ENCODE measurements at regions of chr13 and their contacts with region 1.

Region 1: DNA sequence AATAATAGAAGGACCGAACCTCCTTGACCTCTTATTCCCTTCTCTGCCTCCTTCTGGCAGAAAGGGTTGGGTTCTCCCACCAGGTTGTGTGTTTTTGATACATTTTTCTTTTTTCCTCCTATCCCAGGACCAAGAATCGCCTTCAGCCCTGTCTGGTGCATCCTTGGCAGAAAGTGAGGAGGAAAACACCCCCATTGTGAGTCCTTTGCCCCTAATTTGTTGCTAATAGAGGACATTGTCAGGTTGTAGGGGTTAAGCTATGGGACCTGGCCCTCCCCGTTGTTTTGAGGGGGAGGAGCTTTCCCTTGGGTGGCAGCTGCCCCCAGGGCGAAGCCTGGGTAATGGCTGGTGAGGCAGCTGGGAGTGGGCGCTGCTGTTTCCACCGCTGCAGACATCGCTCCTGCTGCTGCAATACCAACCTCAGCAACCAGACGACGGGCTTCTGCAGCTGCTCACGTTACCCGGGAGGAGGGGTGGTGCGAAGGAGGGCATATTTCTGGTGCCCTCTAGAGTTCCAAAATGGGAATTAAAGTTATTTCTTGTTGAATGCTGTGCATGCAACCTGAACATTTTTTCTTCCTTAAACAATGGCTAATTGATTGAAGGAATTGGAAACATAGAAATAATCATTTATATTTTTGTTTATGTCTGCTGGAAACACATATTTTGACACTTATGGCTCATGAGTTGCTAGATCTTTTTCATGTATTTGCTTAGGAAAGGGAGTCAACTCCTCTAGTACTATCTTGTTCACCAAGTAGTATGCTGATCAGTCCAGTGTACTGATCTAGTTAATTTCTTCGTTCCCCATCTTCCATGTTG is 1.5 kb downstream of the ZMYM2 start:
- DNase-seq: peak; percentile 93
- H3K4me3 Mint-ChIP-seq: peak overlapping the region; percentile 94
- H3K27ac Mint-ChIP-seq: peak overlapping the region; percentile 96
- H3K4me1 Mint-ChIP-seq: peaks cover 34% of the 10 kb centered on the region
- H3K27me3 Mint-ChIP-seq: no peaks in the 10 kb centered on the region

Region 2: DNA sequence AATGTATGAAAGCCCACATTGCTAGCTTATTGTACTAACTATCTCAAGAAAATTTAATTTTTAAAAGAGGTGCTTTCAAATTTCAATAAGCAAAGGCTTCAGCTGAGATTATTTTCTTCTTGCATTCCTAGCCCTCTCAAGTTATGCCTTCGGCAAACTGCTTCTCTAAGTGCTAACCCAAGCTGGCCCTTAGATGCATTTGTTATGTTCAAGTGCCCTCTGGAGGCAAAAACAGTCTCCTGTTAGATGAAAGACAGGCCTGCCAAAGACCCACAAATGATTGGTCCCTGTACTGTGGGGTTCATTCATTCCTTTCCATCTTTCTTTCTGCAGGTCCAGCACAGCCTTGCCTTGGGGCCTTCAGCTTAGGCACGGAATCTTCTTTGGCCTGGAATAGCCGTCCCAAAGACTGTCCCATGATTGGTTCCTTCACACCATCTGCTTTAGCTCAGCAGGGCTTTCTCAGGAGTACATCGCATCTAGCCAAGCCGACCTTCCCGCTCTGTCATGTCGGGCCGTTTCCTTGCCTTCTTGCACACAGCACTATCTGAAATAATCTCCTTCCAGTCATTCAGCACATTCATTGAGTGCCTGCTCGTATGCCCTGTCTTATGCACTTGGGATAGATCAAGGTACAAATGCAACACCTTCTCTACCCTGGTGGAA is 372.3 kb before region 1 on chr13:
- CTCF ChIA-PET with region 1: no interaction called
- POLR2A ChIA-PET with region 1: no interaction called
- intact Hi-C with region 1: no loop called
- DNase-seq: peak; percentile 30
- H3K4me3 Mint-ChIP-seq: peak overlapping the region; percentile 68
- H3K27ac Mint-ChIP-seq: peak overlapping the region; percentile 88
- H3K4me1 Mint-ChIP-seq: peaks cover 22% of the 10 kb centered on the region
- H3K27me3 Mint-ChIP-seq: no peaks in the 10 kb centered on the region

Region 3: DNA sequence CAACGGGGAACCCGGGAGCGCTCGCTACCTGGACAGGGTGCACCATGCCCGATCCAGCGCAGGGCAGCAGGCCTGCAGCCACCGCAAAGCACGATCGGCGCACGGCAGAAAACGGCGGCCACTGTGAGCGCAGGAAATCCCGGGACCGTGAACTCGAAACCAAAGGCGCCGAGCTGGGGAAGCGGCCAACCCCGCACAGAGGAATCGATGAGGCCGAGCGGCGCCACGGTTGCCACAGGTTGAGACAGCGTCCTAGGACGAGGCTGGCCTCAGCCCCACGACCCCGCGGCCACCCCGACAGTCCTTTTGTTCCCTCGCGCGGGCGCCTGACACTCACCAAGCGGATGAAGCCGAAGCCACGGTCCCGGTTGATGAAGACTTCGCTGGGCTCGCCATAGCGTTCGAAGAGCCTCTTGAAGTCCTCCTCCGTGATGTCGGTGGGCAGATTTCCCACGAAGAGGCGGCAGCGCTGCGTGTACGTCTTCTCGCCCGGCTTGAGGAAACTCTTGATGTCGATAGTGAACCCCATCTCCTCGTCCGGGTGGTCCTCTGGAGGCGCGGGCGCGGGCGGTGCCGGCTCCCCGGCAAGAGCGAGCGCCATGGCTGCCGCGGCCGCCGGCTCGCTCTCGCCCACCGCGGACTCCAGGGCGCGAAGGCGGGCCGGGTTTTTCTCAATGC is 177.9 kb before region 1 on chr13:
- CTCF ChIA-PET with region 1: no interaction called
- POLR2A ChIA-PET with region 1: interaction called, 3 read pairs
- intact Hi-C with region 1: loop called (anchors 1 kb)
- DNase-seq: peak; percentile 72
- H3K4me3 Mint-ChIP-seq: peak overlapping the region; percentile 98
- H3K27ac Mint-ChIP-seq: peak overlapping the region; percentile 99
- H3K4me1 Mint-ChIP-seq: peaks cover 6% of the 10 kb centered on the region
- H3K27me3 Mint-ChIP-seq: peaks cover 1% of the 10 kb centered on the region

Region 4: DNA sequence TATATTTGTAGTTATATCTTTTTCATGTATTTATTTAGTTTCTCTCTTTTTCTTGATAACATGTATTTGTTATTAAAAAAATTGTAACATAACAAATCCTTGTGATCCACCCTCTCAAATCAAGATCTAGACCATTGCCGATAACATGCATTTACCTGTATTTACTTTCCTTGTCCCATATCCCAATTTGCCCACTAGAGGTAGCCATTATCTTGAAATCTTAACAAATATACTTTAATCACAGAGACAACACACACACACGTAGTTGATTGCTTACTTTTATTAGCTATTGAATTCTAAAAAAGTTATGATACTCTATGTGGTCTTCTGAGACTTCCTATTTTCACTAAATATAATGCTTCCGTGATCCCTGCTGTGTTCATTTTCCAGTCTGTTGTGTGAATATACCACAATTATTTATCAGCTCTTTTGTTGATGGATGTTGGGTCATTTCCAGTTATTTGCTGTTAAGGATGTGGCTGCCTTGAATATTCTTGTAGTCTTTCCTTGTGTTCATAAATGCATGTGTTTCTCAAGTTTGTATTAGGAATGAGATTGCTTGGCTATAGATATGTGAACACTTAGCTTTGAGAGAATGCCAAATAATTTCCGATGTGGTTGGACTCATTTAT is 32.8 kb before region 1 on chr13:
- CTCF ChIA-PET with region 1: interaction called, 10 read pairs
- POLR2A ChIA-PET with region 1: no interaction called
- intact Hi-C with region 1: no loop called
- DNase-seq: no peak
- H3K4me3 Mint-ChIP-seq: no peak overlapping the region
- H3K27ac Mint-ChIP-seq: no peak overlapping the region
- H3K4me1 Mint-ChIP-seq: no peaks in the 10 kb centered on the region
- H3K27me3 Mint-ChIP-seq: no peaks in the 10 kb centered on the region

Region 5: DNA sequence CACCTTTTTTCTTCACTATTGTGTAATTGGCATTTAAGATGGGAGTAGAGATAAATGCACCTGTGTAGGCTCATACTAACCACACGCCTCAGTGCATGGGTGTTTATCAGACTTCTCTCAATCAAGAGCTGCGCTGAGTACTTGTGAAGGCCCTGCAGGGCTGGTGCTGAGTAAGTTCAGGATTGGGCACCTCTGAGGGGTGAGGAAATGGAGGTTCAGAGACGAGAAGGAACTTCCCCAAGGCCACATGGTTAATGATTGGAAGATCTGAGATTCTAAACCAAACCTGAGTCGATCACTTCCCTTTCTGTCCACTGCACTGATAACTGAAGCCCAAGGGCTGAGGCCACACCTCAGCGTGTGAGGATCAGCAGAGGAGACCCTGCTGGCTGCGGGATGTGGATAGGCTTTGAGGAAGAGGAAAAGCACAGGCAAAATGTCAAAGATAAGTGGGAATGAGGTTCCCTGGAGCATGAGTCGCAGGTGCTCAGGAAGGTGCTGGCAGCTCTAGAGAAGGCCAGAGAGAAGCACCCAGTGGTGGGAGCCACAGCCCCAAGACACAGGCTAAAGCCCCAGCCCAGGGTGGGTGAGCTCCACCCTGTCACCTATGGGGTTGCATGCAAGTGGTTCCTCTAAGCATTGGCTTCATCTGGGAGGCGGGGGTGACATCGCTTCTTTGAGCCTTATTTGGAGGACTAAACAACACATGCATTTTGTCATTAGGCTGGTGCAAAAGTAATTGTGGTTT is 304.4 kb after region 1 on chr13:
- CTCF ChIA-PET with region 1: no interaction called
- POLR2A ChIA-PET with region 1: no interaction called
- intact Hi-C with region 1: no loop called
- DNase-seq: peak; percentile 30
- H3K4me3 Mint-ChIP-seq: no peak overlapping the region
- H3K27ac Mint-ChIP-seq: no peak overlapping the region
- H3K4me1 Mint-ChIP-seq: peaks cover 10% of the 10 kb centered on the region
- H3K27me3 Mint-ChIP-seq: no peaks in the 10 kb centered on the region

Region 6: DNA sequence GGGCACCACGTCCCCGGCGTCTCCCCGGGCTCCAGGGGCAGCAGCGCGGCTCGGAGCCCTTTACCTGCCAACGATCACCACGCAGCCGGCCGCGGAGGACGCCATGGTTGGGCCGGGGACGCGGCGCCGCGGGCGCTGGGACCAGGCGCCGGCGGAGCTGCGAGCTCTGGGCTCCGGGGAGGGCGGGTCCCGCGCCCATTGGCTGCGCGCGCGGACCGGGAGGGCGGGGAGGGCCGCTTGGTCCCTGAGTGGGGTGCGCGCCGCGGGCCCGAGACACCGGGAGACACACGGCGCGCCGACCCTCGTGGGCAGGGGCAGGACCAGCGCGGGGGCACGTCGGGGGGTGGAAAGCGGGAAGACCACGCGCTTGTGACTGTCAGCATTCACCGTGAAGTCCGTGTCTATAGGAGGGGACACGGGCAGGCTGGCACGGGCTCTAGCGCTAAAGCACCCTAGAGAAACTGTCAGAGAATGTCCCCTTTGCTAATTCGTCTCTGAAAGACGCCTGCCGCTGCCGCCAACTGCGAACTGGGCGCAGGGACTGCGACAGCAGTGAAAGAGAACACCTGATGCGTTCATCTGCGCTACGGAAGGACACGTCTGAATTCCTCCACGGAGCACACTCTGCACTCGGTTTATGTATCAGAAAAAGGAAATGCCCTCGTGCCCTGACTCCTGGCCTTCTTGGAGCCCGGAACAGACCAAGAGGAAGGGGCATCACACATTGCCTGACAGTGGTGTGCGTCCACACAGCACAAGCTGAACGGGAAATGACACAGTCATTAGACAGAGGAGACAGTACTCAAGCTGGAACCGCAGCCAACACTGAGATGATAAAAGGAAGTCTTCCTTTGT is 565.9 kb after region 1 on chr13 and contains the start of gene CRYL1:
- CTCF ChIA-PET with region 1: no interaction called
- POLR2A ChIA-PET with region 1: no interaction called
- intact Hi-C with region 1: loop called (anchors 5 kb)
- DNase-seq: peak; percentile 77
- H3K4me3 Mint-ChIP-seq: peak within 1 kb of the TSS; percentile 84
- H3K27ac Mint-ChIP-seq: peak within 1 kb of the TSS; percentile 86
- H3K4me1 Mint-ChIP-seq: peaks cover 33% of the 10 kb centered on the region
- H3K27me3 Mint-ChIP-seq: peaks cover 5% of the 10 kb centered on the region
- total RNA-seq, gene CRYL1: 17.5 to 18.2 TPM

Measured in activated CD4-positive, alpha-beta memory T cell treated with anti-CD3 and anti-CD28 coated beads for 36 hours (primary cell).